ENCODE measurements at regions of chr16 and their contacts with region 1.

Region 1: DNA sequence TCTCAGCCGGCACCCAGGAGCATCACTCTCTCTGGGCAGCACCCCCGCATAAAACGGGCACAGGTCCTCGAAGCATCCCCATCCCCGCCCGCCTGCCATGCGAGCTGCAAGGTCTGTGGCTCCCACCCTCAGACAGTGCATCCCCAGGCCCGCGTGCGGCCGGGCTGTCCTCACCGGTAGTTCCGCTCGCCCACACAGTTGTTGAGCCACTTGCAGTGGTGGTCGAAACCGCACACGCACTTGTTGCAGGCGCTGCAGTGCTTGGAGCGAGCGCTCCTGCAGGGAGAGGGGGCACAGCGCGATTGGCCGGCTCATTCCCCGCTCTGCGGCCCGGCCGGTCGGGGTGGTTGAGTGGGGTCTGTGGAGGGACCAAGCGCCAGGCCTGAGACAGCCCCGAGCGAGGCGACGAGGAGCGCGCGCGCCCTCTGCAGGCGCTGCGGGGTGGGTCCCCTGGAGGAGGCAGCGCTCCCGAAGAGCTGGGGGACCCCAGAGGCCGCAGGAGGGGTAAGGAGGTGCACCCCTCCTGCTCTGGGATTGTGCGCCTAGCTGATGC is 6.0 kb upstream of the TPPP3 start:
- DNase-seq: peak; percentile 59
- H3K4me3 Mint-ChIP-seq: no peak overlapping the region
- H3K27ac Mint-ChIP-seq: no peak overlapping the region
- H3K4me1 Mint-ChIP-seq: peaks cover 4% of the 10 kb centered on the region
- H3K27me3 Mint-ChIP-seq: peaks cover 14% of the 10 kb centered on the region

Region 2: DNA sequence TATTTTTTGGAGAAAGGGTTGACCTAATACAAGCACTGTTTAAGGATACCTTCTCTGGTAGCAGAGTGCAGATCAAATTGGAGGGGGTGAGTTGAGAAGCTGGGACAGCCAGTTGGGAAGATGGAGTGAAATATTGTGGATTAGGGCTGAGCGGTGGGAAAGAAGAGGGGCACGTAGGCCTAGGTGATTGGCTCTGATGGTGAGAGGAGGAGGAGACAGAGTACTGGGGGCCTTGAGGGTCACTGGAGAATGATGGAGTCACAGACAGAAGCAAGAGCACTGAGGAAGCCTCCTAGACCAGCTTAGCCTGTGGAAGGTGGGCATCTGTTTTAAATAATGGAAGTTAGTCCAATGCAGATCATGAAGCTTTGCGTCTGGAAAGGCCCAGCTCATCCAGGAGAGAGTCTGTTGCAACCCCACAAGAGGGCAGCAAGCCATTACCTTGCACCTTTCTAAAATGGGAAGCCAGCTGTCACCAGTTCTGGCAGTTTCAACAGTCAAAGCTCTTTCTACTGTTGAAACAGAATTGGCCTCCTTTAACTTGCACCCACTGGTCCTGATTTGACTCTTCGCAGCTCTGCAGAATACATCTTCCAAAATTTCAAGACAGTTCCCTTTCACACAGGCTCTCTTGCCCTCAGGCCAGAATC is 138.7 kb before region 1 on chr16:
- CTCF ChIA-PET with region 1: interaction called, 10 read pairs
- intact Hi-C with region 1: loop called (anchors 1 kb)
- DNase-seq: peak; percentile 51
- H3K4me3 Mint-ChIP-seq: no peak overlapping the region
- H3K27ac Mint-ChIP-seq: no peak overlapping the region
- H3K4me1 Mint-ChIP-seq: no peaks in the 10 kb centered on the region
- H3K27me3 Mint-ChIP-seq: peaks cover 26% of the 10 kb centered on the region

Region 3: DNA sequence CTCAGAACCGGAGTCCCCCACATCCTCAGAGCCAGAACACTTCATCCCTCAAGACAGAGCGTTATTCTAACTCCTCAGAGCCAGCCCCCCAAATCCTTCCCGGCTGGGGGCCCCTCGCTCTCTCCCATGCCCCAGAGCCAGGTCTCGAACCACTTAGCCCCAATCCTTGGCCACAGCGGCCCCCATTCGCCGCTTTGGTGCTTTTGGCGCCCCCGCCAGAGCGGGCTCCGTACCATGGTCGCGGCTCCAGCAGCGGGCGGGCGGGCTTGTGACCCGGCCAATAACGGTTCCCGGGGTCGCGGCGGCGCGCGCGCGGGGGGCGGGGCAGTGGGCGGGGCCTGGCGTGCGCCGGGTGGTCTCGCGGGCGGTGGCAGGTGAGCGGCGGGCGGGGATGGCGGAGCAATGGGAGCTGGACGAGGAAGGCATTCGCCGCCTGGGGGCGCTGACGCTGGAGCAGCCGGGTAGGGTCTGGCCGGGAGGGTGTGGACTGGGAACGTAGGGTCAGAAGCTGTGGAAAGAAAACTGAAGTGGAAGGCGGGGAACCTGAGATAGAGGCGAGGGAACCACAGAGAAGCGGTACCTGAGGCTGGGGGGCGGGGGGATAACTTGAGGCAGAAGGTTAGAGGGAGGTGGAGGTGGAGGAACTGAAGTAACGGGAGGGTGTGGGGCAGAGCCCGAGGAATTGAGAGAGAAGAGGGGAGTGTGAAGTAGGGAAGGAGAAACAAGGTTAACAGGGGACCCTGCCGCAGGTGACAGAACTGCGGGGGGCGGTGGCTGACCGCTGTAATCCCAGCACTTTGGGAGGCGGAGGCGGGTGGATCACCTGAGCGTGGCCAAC is 72.6 kb before region 1 on chr16 and contains the starts of genes KCTD19 and LRRC36:
- CTCF ChIA-PET with region 1: interaction called, 16 read pairs
- intact Hi-C with region 1: no loop called
- DNase-seq: peak; percentile 73
- H3K4me3 Mint-ChIP-seq: peak within 1 kb of the TSS; percentile 79
- H3K27ac Mint-ChIP-seq: no peak within 1 kb of the TSS
- H3K4me1 Mint-ChIP-seq: peaks cover 8% of the 10 kb centered on the region
- H3K27me3 Mint-ChIP-seq: peaks cover 45% of the 10 kb centered on the region
- total RNA-seq, gene KCTD19: 1.0 to 1.3 TPM
- total RNA-seq, gene LRRC36: 0.64 TPM in 1 of 2 experiments, not detected in the other

Region 4: DNA sequence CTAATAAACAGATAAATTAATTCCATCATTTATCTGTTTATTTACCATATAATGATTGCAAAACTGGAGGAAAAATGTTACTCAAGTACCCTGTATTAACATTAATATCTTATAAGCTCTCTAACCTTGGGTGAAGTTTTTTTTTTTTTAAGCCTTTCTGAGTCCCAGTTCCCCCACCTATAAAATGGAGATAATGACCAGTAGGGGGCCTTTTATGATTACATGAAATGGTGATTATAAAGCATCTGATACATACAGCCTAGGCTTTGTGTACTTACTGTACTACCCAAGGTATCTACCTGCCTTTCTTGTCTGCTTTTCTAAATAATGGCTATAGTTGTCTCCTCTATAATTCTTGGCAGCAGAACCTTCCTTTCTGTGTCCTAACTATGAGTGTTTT is 50.1 kb before region 1 on chr16:
- CTCF ChIA-PET with region 1: interaction called, 11 read pairs
- intact Hi-C with region 1: loop called (anchors 1 kb)
- DNase-seq: no peak
- H3K4me3 Mint-ChIP-seq: no peak overlapping the region
- H3K27ac Mint-ChIP-seq: no peak overlapping the region
- H3K4me1 Mint-ChIP-seq: no peaks in the 10 kb centered on the region
- H3K27me3 Mint-ChIP-seq: no peaks in the 10 kb centered on the region

Measured in activated naive CD4-positive, alpha-beta T cell treated with anti-CD3 and anti-CD28 coated beads for 36 hours (primary cell).